Tibial artery (tissue), 4 donors: ENCODE measurements at regions of chr2 and their contacts with region 1.

Region 1: GRCh38 chr2:192162392-192163042 is 32.2 kb downstream of the TMEFF2 start:
- DNase-seq: peak in 1 of 2 donors; percentile 67
- H3K4me3 ChIP-seq: no peak overlapping the region
- H3K27ac ChIP-seq: no peak overlapping the region
- H3K4me1 ChIP-seq: peaks cover 0 to 4% (median 0%) of the 10 kb centered on the region in 4 donors
- H3K27me3 ChIP-seq: no peaks in the 10 kb centered on the region
- CTCF ChIP-seq: peak; percentile 88 to 96

Region 2: GRCh38 chr2:191555092-191555742 is 607.3 kb before region 1 on chr2:
- intact Hi-C with region 1: loop called (anchors 5 kb)
- DNase-seq: peak; percentile 83 to 85
- H3K4me3 ChIP-seq: no peak overlapping the region
- H3K27ac ChIP-seq: no peak overlapping the region
- H3K4me1 ChIP-seq: peaks cover 0 to 7% (median 0%) of the 10 kb centered on the region in 4 donors
- H3K27me3 ChIP-seq: peaks cover 0 to 5% of the 10 kb centered on the region in 2 donors
- CTCF ChIP-seq: peak; percentile 57 to 67